PC-9 (cell line): ENCODE measurements at regions of chr2 and their contacts with region 1.

Region 1: GRCh38 chr2:230824406-230824978 is 40.2 kb upstream of the ITM2C start:
- DNase-seq: peak; percentile 53 to 58
- H3K4me3 ChIP-seq: peak overlapping the region; percentile 31; the same call in 1 of the 2 replicates
- H3K27ac ChIP-seq: no peak overlapping the region
- H3K4me1 ChIP-seq: no peaks in the 10 kb centered on the region
- H3K27me3 ChIP-seq: 0 out of 2 replicates have a peak, but pooled peaks cover 3% of the 10 kb centered on the region
- CTCF ChIP-seq: peak; percentile 88

Region 2: GRCh38 chr2:230170532-230170931 is 654.0 kb before region 1 on chr2:
- CTCF ChIA-PET with region 1: interaction called, 24 read pairs
- POLR2A ChIA-PET with region 1: no interaction called
- intact Hi-C with region 1: no loop called
- DNase-seq: peak; percentile 17 to 75
- H3K4me3 ChIP-seq: peak overlapping the region; percentile 14; the same call in 1 of the 2 replicates
- H3K27ac ChIP-seq: no peak overlapping the region
- H3K4me1 ChIP-seq: peaks cover 7% of the 10 kb centered on the region; the same call in 1 of the 2 replicates
- H3K27me3 ChIP-seq: no peaks in the 10 kb centered on the region
- CTCF ChIP-seq: no peak

Region 3: GRCh38 chr2:230680463-230681170 is 143.9 kb before region 1 on chr2:
- CTCF ChIA-PET with region 1: no interaction called
- POLR2A ChIA-PET with region 1: no interaction called
- intact Hi-C with region 1: no loop called
- DNase-seq: no peak
- H3K4me3 ChIP-seq: no peak overlapping the region
- H3K27ac ChIP-seq: no peak overlapping the region
- H3K4me1 ChIP-seq: peaks cover 33% of the 10 kb centered on the region
- H3K27me3 ChIP-seq: no peaks in the 10 kb centered on the region
- CTCF ChIP-seq: no peak

Region 4: DNA sequence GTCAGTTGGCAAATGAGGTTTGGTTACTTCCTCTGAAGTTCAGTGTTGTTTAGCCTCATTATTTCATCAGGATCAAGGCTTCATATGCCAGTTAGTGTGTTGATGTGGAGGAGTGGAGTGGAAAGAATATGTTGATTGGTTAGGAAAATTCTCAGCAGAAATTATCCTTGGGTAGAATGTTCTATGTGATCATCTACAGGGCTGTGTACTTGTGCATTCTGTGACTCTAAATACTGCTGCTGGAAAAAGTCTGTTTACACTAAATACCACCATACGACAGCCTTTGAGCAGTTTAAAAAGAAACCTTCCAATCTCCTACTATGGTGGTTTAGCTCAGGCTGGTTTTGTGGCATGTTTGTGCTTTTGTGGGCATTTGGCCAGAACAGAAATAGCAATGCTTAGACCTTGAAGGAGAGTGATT is 86.1 kb before region 1 on chr2:
- CTCF ChIA-PET with region 1: no interaction called
- POLR2A ChIA-PET with region 1: no interaction called
- intact Hi-C with region 1: no loop called
- DNase-seq: no peak
- H3K4me3 ChIP-seq: peak overlapping the region; percentile 22; the same call in 1 of the 2 replicates
- H3K27ac ChIP-seq: peak overlapping the region; percentile 94
- H3K4me1 ChIP-seq: peaks cover 56% of the 10 kb centered on the region
- H3K27me3 ChIP-seq: no peaks in the 10 kb centered on the region
- CTCF ChIP-seq: no peak

Region 5: GRCh38 chr2:230987137-230988020 is 162.9 kb after region 1 on chr2:
- CTCF ChIA-PET with region 1: interaction called, 3 read pairs
- POLR2A ChIA-PET with region 1: no interaction called
- intact Hi-C with region 1: loop called (anchors 1 kb)
- DNase-seq: peak in 1 of 2 experiments; percentile 82
- H3K4me3 ChIP-seq: peak overlapping the region; percentile 64
- H3K27ac ChIP-seq: no peak overlapping the region
- H3K4me1 ChIP-seq: peaks cover 3% of the 10 kb centered on the region; the same call in 1 of the 2 replicates
- H3K27me3 ChIP-seq: peaks cover 6% of the 10 kb centered on the region
- CTCF ChIP-seq: peak; percentile 91

Region 6: DNA sequence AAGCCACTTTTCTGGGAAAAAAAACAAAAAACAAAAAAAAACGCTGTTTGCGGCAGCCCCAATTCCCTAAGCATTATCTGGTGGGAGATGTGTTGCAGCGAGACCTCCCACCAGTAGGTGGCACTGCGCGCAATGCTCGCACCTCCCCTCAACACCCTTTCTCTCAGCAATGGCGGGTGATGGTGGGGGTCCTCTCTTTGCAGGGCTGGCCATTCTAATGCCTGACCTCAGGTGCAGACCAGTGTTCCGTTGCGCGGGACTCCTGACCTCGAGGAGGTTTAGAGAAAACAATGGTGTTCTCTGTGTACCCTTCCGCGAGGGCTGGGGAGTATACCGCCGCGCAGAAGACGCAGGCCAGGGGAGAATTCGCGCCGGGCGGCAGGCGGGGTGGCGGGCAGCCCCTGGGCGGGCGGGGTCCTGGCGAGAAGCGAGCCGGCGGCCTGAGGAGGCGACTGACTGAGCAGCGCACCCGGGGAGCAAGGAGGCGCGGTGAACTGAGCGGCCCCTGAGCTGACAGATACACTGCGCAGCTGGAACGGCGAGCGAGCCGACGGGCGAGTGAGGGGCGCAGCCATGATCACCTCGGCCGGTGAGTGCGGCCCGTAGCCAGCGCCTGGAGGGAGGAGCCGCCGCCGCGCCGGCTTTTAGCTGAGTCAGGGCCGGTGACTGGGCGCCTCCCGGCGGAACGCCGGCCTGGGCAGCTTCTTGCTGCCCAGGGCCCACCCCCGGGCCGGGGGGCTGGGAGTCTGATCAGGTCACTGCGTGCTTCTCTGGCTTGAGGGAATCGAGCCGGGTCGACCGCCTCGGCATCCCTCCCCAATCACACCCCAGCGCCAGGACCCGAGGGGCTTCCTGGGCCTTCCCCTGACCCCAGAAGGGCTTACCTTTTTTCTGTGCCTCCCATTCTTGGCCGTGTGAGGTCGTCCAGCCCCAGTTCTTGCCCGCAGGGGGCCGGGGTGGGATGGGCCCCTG is 232.2 kb after region 1 on chr2 and contains the start of gene PSMD1:
- CTCF ChIA-PET with region 1: interaction called, 11 read pairs
- POLR2A ChIA-PET with region 1: no interaction called
- intact Hi-C with region 1: loop called (anchors 5 kb)
- DNase-seq: peak; percentile 71 to 90
- H3K4me3 ChIP-seq: peak within 1 kb of the TSS; percentile 95
- H3K27ac ChIP-seq: peak within 1 kb of the TSS; percentile 80
- H3K4me1 ChIP-seq: peaks cover 24% of the 10 kb centered on the region
- H3K27me3 ChIP-seq: no peaks in the 10 kb centered on the region
- CTCF ChIP-seq: peak; percentile 92
- total RNA-seq, gene PSMD1: 80.6 and 119 TPM in 2 replicates

Region 7: DNA sequence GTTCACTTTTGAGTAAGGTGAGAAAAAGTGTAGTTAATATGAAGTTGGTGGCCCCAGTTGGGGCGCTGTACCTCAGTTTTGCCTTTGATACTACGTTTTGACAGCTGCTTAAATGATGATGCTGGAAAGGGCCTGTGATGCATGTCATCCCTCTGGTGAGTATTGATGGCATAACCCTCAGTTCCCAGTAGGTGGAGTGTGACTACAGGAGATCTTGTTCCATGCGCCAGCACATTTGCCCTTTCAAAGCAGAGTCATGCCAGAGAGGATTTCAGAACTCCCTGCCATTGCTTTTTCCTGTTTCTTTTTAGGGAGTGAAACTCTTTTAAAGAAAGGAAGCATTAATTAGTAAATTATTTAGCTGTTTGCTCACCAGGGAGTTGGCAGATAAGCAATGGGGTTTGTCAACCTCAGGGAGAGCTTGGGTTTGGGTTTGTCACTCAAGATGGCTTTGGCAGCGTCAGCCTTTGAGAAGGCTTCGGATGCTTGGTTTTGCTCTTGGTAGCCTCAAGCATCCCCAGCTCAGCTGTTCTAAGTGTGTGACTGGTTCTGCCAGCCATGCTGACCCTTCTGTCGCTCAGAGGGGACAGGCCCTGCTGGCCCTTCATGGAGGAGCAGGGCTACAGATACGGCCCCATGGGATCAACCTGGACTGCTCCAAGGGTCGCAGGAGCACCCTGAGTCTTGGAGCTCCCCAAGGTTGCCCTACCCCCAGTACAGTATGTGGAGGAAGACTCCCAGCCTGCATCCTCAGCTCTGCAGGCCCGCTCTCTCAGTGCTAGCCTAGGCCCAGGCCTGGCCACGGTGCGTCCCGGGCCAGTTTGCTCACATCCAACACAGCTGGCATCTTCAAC is 403.0 kb after region 1 on chr2:
- CTCF ChIA-PET with region 1: no interaction called
- POLR2A ChIA-PET with region 1: no interaction called
- intact Hi-C with region 1: loop called (anchors 10 kb)
- DNase-seq: peak; percentile 52 to 65
- H3K4me3 ChIP-seq: no peak overlapping the region
- H3K27ac ChIP-seq: no peak overlapping the region
- H3K4me1 ChIP-seq: no peaks in the 10 kb centered on the region
- H3K27me3 ChIP-seq: no peaks in the 10 kb centered on the region
- CTCF ChIP-seq: peak; percentile 86

Region 8: DNA sequence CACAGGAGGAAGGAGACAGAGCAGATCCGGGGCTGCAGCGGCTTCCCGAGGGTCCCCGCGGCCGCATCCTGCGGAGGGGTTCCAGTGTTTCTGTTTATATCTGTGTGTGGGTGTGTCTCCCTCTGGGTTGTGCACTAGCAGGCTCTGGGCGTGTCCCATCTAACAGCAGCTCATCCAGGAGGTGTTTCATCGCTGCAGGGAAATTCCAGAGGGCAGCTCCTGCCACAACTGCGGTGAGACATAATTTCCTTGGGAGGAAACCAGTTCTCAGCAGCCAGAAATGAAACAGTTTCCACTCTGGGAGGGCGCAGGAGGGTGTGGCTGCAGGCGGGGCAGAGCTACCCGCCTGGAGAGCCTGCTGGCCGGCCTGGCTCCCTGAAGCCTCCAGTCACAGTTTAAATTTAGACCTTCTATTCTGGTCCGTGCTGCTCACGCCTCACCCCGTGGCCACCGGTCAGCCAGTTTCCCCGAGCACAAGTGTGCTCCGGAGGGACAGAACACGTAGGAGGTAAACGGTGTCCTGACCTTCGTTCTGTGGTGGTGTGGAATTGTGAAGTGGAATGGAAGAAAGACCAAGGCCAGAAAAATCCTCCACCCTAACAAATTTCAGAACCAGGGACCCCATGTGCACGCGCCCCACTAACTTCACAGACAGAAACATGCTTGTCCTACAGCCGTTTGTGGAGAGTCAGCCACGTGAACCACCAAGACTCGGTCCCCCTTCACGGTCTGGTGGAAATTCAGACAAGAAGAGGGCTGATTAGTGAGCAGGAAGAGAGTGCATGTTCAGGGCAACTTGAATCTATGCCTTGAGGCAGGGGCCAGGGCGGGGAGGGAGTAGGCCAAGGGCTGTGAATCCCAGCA is 818.4 kb after region 1 on chr2:
- CTCF ChIA-PET with region 1: no interaction called
- POLR2A ChIA-PET with region 1: interaction called, 11 read pairs
- intact Hi-C with region 1: no loop called
- DNase-seq: peak; percentile 95 to 98
- H3K4me3 ChIP-seq: peak overlapping the region; percentile 48; the same call in 1 of the 2 replicates
- H3K27ac ChIP-seq: peak overlapping the region; percentile 98
- H3K4me1 ChIP-seq: peaks cover 64% of the 10 kb centered on the region
- H3K27me3 ChIP-seq: no peaks in the 10 kb centered on the region
- CTCF ChIP-seq: no peak